ENCODE measurements at regions of chr14 and their contacts with region 1.

Region 1: DNA sequence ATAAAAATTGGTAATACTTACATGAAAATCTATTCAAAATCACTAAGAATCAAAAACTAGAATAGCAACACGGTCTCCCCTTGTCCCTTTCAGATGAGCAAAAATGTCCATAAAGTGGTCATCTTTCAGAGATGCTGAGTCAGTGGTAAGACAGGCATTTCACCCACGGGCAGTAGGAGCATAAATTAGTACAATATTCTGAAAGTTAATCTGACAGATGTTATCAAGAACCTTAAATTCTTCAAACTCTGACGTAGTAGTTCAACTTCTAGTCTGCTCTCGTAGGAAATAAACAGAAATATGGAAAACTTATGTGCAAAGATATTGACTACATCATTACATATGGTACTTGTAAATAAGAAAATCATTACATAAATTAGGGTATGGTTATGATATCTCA is 33.1 kb upstream of the GNPNAT1 start:
- H3K4me3 Mint-ChIP-seq: no peak overlapping the region
- H3K27ac Mint-ChIP-seq: no peak overlapping the region
- H3K4me1 Mint-ChIP-seq: no peaks in the 10 kb centered on the region
- H3K27me3 Mint-ChIP-seq: peaks cover 2% of the 10 kb centered on the region

Region 2: GRCh38 chr14:52961060-52961639 is 136.6 kb after region 1 on chr14:
- intact Hi-C with region 1: loop called (anchors 1 kb)
- H3K4me3 Mint-ChIP-seq: no peak overlapping the region
- H3K27ac Mint-ChIP-seq: no peak overlapping the region
- H3K4me1 Mint-ChIP-seq: no peaks in the 10 kb centered on the region
- H3K27me3 Mint-ChIP-seq: no peaks in the 10 kb centered on the region

Region 3: GRCh38 chr14:53055003-53055402 is 230.5 kb after region 1 on chr14:
- intact Hi-C with region 1: loop called (anchors 1 kb)
- H3K4me3 Mint-ChIP-seq: no peak overlapping the region
- H3K27ac Mint-ChIP-seq: no peak overlapping the region
- H3K4me1 Mint-ChIP-seq: no peaks in the 10 kb centered on the region
- H3K27me3 Mint-ChIP-seq: no peaks in the 10 kb centered on the region

Region 4: DNA sequence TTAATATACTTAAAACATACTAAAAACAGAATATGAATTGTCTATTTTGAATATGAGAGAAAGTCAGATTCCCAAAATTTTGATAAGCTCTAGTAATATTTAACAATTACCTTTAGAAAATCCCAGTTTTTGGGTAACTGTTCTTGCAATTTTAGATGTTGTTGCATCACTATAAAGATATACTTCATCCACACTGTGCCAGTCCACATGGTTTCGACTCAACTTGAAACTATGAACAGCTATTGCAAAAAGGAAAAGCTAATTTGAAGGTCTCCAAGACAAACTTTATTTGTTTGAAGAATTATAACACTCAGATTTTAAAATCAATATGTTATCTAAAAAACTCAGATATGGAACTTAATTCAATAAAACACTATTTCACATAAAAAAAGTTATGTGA is 268.7 kb after region 1 on chr14:
- intact Hi-C with region 1: no loop called
- H3K4me3 Mint-ChIP-seq: no peak overlapping the region
- H3K27ac Mint-ChIP-seq: no peak overlapping the region
- H3K4me1 Mint-ChIP-seq: no peaks in the 10 kb centered on the region
- H3K27me3 Mint-ChIP-seq: no peaks in the 10 kb centered on the region

Region 5: GRCh38 chr14:54175298-54175942 is 1350.9 kb after region 1 on chr14:
- intact Hi-C with region 1: loop called (anchors 10 kb)
- H3K4me3 Mint-ChIP-seq: no peak overlapping the region
- H3K27ac Mint-ChIP-seq: no peak overlapping the region
- H3K4me1 Mint-ChIP-seq: no peaks in the 10 kb centered on the region
- H3K27me3 Mint-ChIP-seq: peaks cover 13% of the 10 kb centered on the region